Posterior vena cava (tissue), 2 donors: ENCODE measurements at regions of chr7 and their contacts with region 1.

Region 1: GRCh38 chr7:94004024-94004951 is at the start of gene BET1:
- DNase-seq: peak; percentile 98
- total RNA-seq, gene BET1: 17.0 to 19.2 TPM

Region 2: DNA sequence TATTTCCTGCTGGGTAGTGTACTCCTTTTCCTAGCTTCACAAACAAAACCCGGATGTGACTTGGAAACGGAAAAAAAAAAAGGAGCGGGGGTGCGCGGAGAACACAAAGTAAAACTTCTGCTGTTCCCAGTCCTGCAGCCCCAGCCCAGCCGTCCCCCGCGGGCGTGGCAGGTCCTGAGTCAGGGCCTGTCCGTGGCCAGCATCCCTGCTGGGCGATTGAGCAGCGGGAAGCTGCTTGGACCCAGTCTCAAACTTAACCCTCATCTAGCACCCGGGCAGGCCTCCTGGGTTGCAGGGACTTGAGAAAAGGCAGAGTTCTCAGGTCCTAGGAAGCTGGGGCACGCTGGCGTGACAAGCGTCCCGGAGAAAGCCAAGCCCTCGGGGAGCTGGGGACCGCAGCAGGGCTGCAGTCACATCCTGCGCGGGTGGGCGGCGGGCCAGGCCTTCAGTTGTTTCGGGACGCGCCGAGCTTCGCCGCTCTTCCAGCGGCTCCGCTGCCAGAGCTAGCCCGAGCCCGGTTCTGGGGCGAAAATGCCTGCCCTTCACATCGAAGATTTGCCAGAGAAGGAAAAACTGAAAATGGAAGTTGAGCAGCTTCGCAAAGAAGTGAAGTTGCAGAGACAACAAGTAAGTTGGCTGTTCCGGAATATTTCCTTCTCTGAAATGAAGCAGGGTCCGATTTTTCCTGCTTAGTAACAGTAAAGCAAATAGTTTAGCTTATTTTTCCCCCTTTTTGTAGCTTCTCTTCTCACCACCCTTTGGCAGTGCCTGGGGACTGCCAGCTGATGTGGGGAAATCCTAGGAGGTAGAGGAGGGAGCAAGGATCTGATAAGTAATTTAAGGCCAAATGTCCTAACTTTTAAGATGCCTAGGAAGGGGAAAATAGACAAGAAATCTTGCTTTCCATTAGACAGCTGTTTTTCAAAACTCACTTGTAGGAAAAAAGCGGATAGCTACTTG is 82.4 kb before region 1 on chr7 and contains the start of gene GNG11:
- intact Hi-C with region 1: loop called in 1 of 2 experiments (anchors 10 kb)
- DNase-seq: peak; percentile 94
- total RNA-seq, gene GNG11: 22.7 to 24.1 TPM

Region 3: GRCh38 chr7:93935112-93935511 is 69.2 kb before region 1 on chr7:
- intact Hi-C with region 1: no loop called
- DNase-seq: no peak